ENCODE measurements at regions of chr22 and their contacts with region 1.

Region 1: GRCh38 chr22:37887610-37888378 is 18.3 kb upstream of the MICALL1 start:
- DNase-seq: no peak
- ATAC-seq: peak; percentile 69 to 89
- H3K4me3 ChIP-seq: no peak overlapping the region
- H3K27ac ChIP-seq: no peak overlapping the region
- H3K4me1 ChIP-seq: peaks cover 3% of the 10 kb centered on the region
- H3K27me3 ChIP-seq: no peaks in the 10 kb centered on the region

Region 2: DNA sequence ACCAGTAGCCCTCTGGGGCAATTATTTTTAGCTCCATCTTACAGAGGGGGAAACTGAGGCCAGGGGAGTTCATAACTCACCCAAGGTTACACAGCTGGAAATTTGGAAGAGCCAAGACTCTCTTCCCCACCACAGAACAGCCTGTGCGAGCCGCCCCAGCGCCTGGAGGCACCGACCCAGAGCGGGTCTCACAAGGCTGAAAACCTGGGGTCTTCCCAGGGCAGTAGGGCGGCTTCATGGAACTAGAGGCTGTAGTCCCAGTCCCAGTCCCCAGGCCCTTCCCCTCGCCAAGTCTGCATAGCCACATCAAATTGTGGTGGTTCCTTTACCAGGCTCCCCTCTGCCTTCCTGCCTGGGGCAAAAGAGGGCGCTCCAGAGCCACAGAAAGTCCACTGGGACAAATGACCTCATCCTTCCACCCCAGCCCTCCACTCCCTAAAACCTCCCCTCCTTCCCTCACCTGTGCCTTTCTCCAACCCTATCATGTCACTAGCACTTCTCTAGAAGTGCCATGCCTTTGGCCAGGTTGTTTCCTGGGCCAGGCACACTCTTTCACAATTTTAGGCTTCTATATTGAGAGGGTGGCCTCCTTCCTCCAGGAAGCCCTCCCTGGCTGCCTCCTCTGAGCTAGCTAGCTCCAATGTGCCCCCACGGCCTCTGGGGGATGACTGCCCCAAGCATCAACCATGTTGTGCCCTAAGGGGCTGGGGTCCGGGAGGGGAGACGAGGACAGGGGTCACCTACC is 342.7 kb before region 1 on chr22:
- intact Hi-C with region 1: no loop called
- DNase-seq: peak; percentile 70 to 90 (median 86)
- ATAC-seq: peak; percentile 37 to 58
- H3K4me3 ChIP-seq: no peak overlapping the region
- H3K27ac ChIP-seq: peak overlapping the region; percentile 66
- H3K4me1 ChIP-seq: peaks cover 7% of the 10 kb centered on the region
- H3K27me3 ChIP-seq: no peaks in the 10 kb centered on the region

Region 3: GRCh38 chr22:37933711-37934376 is 46.0 kb after region 1 on chr22:
- intact Hi-C with region 1: loop called in 1 of 4 experiments (anchors 10 kb)
- DNase-seq: peak; percentile 92 to 96 (median 96)
- ATAC-seq: peak; percentile 96 to 97
- H3K4me3 ChIP-seq: no peak overlapping the region
- H3K27ac ChIP-seq: peak overlapping the region; percentile 58
- H3K4me1 ChIP-seq: peaks cover 10% of the 10 kb centered on the region
- H3K27me3 ChIP-seq: no peaks in the 10 kb centered on the region

Region 4: DNA sequence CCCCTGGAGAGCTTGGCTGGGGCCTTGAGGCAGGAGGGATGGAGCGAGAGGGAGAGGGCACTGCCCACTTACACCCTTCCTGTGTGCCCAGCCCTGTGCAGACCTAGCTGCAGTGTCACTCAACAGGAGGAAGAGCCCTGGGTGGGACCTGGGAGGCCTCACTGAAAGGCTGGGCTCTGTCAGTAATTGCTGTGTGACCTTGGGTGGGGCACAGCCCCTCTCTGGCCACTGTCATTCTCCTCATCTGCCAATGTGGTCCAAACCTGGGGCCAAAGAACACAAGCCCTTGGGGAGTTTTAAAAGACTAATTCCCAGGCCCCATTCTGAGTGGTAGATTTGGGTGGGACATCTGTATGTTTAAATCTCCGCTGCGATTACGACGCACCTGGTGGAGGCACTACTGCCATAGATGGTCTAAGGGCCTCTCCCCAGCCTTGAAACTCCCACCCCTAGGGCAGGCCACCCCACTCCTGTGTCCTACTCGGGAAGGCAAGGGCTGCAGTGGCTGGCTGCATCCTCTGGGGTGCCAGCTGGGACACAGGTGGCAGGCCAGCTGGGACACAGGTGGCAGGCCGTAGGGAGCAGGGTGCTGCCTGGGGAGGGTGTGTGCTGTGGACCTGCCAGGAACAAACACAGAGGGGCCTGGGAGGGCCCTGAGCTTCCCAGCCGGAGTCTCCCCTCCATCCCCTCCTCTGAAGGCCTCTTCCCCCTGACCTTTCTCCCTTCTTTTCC is 108.9 kb after region 1 on chr22:
- intact Hi-C with region 1: no loop called
- DNase-seq: no peak
- ATAC-seq: peak; percentile 13 to 25
- H3K4me3 ChIP-seq: no peak overlapping the region
- H3K27ac ChIP-seq: no peak overlapping the region
- H3K4me1 ChIP-seq: no peaks in the 10 kb centered on the region
- H3K27me3 ChIP-seq: no peaks in the 10 kb centered on the region